ENCODE measurements at regions of chr15 and their contacts with region 1.

Region 1: DNA sequence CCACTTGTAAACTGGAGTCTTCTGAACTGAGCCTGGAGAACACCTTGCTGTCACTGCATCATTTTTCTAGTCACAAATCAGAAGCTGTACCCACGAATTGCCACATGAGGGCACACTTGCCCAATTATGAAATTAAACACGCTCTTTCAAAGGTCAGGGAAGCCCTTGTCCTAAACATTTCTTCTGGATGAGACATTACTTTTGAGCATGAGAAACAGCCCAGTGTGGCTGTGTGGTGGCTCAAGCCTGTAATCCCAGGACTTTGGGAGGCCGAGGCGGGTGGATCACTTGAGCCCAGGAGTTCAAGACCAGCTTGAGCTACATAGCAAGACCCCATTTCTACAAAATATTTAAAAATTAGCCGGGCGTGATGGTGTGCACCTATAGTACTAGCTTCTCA is 27.5 kb upstream of the CFAP161 start:
- DNase-seq: peak; percentile 62
- H3K4me3 Mint-ChIP-seq: no peak overlapping the region
- H3K27ac Mint-ChIP-seq: no peak overlapping the region
- H3K4me1 Mint-ChIP-seq: no peaks in the 10 kb centered on the region
- H3K27me3 Mint-ChIP-seq: peaks cover 74% of the 10 kb centered on the region
- CTCF ChIP-seq: peak; percentile 71

Region 2: DNA sequence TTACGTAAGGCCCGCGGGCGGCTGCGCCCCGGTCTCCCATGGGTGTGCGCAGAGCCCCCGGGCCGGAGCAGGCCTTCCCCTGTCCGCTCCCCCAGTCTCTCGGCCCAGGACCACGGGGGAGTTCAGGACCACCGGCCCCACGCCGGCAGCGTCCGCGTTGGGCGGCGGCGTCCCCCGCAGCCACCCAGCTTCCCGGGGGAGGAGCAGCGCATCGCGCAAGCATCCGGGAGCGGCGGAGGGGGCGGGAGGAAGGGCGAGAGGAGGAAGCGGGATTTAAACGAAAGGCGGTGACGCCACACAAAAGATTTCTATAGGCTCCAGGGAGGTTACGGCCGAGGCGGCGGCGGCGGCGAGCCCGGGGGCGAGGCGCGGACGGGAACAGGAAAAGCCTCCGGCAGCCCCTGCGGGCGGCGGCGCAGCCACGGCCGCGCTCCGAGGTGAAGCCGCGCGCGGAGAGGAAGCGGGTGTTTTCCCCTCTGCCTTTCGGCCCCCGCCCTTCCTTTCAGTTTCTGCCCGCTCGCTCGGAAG is 105.9 kb before region 1 on chr15 and contains the start of gene TLNRD1:
- CTCF ChIA-PET with region 1: no interaction called
- intact Hi-C with region 1: loop called (anchors 5 kb)
- DNase-seq: peak; percentile 96
- H3K4me3 Mint-ChIP-seq: peak within 1 kb of the TSS; percentile 93
- H3K27ac Mint-ChIP-seq: peak within 1 kb of the TSS; percentile 98
- H3K4me1 Mint-ChIP-seq: peaks cover 27% of the 10 kb centered on the region
- H3K27me3 Mint-ChIP-seq: no peaks in the 10 kb centered on the region
- CTCF ChIP-seq: no peak
- total RNA-seq, gene TLNRD1: 31.8 and 33.4 TPM in 2 replicates

Region 3: DNA sequence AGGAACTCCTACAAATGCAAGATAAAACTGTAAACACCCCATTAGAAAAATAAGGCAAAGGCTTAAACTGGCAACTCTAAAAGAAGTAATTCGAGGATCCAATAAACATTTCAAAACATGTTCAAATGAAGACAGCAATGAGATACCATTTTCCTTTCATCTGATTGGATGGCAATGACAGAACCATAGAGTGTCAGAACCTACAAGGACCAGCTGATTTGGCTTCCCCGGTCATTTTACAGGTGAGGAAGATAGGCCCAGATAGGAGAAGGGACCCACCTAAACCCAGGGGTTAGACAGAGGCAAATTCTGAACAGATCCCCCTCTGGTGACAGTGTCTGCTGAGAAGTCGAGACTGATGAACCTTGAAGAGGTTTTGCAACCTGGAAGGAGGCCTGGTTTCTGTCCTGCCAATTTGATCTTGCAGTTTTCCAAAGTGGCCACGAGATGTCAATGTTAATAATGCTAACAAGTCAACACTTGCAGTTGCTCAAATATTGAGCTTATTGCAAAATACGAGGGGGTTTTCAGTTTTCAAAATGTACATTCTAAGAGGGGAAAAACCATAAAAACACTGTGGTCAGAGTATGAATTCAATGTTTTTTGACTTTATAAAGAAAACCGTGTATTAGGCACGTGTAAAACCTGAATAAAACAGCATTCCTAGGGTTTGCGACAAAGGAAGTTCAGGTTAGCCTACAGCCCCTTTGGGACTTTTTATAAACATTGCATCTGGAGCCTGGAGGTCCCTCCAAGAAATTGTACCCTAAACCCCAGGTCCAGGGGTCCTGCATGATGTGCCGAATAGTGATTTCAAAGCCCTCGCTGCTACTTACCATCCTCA is 49.0 kb after region 1 on chr15:
- CTCF ChIA-PET with region 1: interaction called, 5 read pairs
- intact Hi-C with region 1: loop called (anchors 5 kb)
- DNase-seq: peak; percentile 33
- H3K4me3 Mint-ChIP-seq: no peak overlapping the region
- H3K27ac Mint-ChIP-seq: no peak overlapping the region
- H3K4me1 Mint-ChIP-seq: no peaks in the 10 kb centered on the region
- H3K27me3 Mint-ChIP-seq: peaks cover 56% of the 10 kb centered on the region
- CTCF ChIP-seq: peak; percentile 40

Region 4: DNA sequence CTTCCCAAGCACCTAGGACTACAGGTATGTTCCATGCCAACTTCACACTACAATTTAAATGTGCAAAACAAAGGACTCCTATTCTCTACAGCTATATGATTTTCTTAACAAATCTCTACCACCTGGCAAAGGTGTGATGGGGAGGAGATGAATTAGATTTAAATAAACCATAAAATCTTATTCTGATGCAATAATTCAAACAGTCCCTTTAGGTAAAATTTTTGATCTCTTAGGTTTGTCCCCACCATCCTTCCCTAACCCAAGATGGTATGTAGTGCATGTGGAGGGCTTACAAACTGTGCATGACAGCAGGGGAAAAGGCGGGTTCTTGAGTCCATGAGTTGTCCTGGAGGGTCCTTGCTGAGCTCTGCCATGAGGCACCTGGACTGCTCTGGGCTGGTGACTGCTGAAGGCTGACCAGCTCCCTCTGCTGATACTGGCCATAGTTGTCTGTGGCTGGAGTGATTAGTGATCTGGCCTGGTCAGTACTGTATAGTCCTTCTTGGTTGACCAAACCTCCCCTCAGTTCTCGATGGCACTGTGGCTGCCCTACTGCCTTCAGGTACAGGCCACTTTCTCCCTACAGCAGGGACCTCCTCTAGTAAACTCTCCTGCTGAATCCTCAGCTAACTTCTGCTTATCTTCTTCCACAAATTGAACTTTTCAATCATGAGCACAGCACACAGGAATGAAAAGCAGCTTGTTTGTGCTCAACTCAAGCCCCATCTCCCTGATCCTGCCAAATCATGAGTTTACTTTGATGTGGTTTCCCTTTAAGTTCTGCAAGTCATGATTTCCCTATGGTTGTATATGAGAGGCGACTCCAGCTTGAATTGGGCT is 57.6 kb after region 1 on chr15:
- CTCF ChIA-PET with region 1: no interaction called
- intact Hi-C with region 1: loop called (anchors 2 kb)
- DNase-seq: peak; percentile 20
- H3K4me3 Mint-ChIP-seq: no peak overlapping the region
- H3K27ac Mint-ChIP-seq: no peak overlapping the region
- H3K4me1 Mint-ChIP-seq: no peaks in the 10 kb centered on the region
- H3K27me3 Mint-ChIP-seq: peaks cover 29% of the 10 kb centered on the region
- CTCF ChIP-seq: no peak

Region 5: GRCh38 chr15:81400640-81401236 is 294.2 kb after region 1 on chr15:
- CTCF ChIA-PET with region 1: no interaction called
- intact Hi-C with region 1: loop called (anchors 5 kb)
- DNase-seq: peak; percentile 33
- H3K4me3 Mint-ChIP-seq: no peak overlapping the region
- H3K27ac Mint-ChIP-seq: no peak overlapping the region
- H3K4me1 Mint-ChIP-seq: no peaks in the 10 kb centered on the region
- H3K27me3 Mint-ChIP-seq: peaks cover 56% of the 10 kb centered on the region
- CTCF ChIP-seq: peak; percentile 39

Region 6: GRCh38 chr15:81473177-81473576 is 366.6 kb after region 1 on chr15:
- CTCF ChIA-PET with region 1: no interaction called
- intact Hi-C with region 1: no loop called
- DNase-seq: no peak
- H3K4me3 Mint-ChIP-seq: no peak overlapping the region
- H3K27ac Mint-ChIP-seq: no peak overlapping the region
- H3K4me1 Mint-ChIP-seq: no peaks in the 10 kb centered on the region
- H3K27me3 Mint-ChIP-seq: peaks cover 40% of the 10 kb centered on the region
- CTCF ChIP-seq: no peak

Measured in Calu3 (cell line).